Aorta (tissue), 5 donors: ENCODE measurements at regions of chr1 and their contacts with region 1.

Region 1: DNA sequence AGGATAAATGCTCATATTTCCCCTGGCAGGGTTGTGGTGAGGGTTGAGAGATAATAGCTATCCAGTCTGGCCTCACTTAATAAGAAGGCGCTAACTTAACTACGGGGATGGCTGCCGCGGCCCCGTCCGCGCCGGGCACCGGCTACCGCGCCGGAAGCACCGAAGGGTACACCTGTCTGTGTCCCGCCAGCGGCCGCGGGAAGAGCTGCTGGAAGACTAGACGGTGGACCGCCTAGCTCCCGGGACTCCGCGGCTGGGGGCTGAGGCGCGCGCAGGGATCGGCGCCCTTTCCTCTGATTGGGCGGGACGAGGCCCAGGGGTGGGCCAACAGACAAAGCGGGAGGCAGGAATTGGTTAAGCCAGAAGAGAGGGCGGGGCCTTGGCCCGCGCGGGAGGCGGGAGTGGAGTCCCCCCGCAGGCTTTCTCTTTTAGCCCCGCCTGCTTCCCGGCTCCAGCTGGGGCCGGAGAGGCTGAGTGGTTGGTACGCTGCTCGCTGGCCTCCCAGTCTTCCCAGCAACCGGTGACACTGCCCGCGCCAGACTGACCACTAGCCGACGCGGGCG is at the start of gene ZNF672:
- DNase-seq: peak; percentile 99 to 100
- ATAC-seq: peak; percentile 98
- H3K4me3 ChIP-seq: peak within 1 kb of the TSS; percentile 47 to 52
- H3K27ac ChIP-seq: peak within 1 kb of the TSS; percentile 91 to 96
- H3K4me1 ChIP-seq: no peaks in the 10 kb centered on the region
- H3K27me3 ChIP-seq: no peaks in the 10 kb centered on the region
- total RNA-seq, gene ZNF672: 18.7 to 30.5 TPM

Region 2: DNA sequence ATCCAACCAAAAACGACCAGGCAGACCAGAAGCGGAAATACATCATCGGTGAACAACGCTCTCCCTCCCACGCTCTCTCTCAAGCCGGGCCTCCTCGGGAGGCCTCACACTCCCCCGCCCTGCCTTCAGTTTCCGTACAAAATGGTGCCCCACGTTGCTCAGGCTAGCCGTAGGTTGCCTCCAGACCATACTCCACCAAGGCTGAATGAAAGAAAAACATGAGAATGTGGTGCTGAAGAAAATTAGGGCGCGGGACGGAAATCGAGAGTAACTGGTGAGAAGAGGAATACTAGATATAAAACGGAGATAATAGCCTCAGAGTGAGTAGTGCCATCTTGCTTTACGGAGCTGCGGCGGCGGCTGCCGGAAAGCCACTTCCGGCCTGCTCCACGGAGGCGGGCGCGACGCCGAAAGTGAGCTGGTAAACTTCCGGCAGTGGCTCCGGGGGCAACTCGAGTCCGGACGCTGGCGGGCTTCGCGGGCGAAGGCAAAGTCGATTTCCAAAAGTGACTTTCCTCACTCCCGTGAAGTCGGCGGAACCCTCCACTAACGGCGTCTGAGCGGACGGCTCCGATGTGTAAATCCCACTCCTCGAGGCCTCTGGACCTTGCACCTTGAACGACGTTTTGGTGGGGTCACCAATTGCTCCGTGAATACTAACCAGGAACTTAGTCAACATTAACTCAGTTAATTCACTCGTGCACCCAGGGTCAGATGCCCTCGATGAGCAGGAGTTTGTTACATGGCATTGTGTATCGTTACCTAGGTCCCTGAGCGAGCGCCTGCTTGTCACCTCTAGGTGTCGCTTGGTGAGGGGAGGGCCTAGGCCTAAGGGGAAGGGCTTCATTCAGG is 11.7 kb before region 1 on chr1 and contains the start of gene SH3BP5L:
- intact Hi-C with region 1: loop called in 1 of 2 experiments (anchors 1 kb)
- DNase-seq: peak; percentile 95 to 97
- ATAC-seq: peak; percentile 97
- H3K4me3 ChIP-seq: peak within 1 kb of the TSS; percentile 71 to 93
- H3K27ac ChIP-seq: peak within 1 kb of the TSS; percentile 34 to 92
- H3K4me1 ChIP-seq: peaks cover 6 to 7% of the 10 kb centered on the region in 2 donors
- H3K27me3 ChIP-seq: no peaks in the 10 kb centered on the region
- total RNA-seq, gene SH3BP5L: 21.4 to 25.1 TPM

Region 3: GRCh38 chr1:248858891-248859889 is 21.3 kb after region 1 on chr1 and contains the start of gene ZNF692:
- intact Hi-C with region 1: loop called (anchors 1 kb)
- DNase-seq: peak; percentile 99
- ATAC-seq: peak; percentile 96
- H3K4me3 ChIP-seq: peak within 1 kb of the TSS; percentile 39 to 59
- H3K27ac ChIP-seq: peak within 1 kb of the TSS in 1 of 2 donors; percentile 77
- H3K4me1 ChIP-seq: peaks cover 0 to 3% of the 10 kb centered on the region in 2 donors
- H3K27me3 ChIP-seq: no peaks in the 10 kb centered on the region
- total RNA-seq, gene ZNF692: 20.7 to 41.3 TPM